Posterior vena cava (tissue), 2 donors: ENCODE measurements at regions of chr1 and their contacts with region 1.

Region 1: GRCh38 chr1:40825435-40825788 is 36.8 kb downstream of the CITED4 start:
- DNase-seq: no peak

Region 2: GRCh38 chr1:40630488-40631381 is 194.7 kb before region 1 on chr1:
- intact Hi-C with region 1: loop called (anchors 10 kb)
- DNase-seq: no peak

Region 3: DNA sequence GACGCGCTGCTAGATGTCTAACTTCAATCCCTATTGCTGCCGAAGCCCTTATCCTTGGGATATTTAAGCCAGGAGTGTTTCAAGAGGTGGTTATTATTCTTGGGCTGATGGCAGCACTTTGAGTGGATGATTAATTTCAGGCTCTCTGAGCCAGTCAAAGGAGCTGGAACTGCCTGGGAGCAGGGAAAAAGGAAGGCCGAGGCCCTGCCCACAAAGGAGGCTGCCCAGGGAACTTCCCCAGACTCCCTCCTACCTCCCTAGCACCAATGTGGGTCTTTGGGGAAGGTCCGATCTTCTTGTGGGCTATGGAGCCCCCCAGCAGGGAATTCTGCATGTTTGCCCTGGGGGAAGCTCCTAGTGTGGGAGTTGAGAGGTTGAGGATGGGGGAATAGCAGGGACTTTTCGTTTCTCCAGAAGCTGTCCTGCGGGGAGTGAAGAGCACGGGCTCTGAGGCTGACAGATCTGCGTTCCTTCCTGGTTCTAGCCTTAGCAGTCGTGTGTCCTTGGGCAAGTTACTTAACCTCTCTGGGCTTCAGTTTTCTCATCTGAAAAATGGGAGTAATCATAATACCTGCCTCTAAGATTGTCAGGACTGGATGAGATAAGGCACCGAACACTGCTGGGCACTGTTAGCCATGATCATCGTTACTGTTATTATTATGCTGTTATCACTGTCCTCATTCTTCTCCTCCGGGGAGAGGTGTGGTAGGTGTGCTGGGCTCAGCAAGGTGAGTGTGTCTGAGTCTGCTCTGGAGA is 35.6 kb before region 1 on chr1:
- intact Hi-C with region 1: loop called in 1 of 2 experiments (anchors 1 kb)
- DNase-seq: no peak

Region 4: GRCh38 chr1:41175546-41175945 is 350.1 kb after region 1 on chr1:
- intact Hi-C with region 1: no loop called
- DNase-seq: no peak